ENCODE measurements at regions of chr4 and their contacts with region 1.

Region 1: GRCh38 chr4:62028745-62029144 is 828.6 kb downstream of the ADGRL3 start:
- DNase-seq: no peak
- ATAC-seq: no peak
- H3K4me3 ChIP-seq: no peak overlapping the region
- H3K4me3 Mint-ChIP-seq: no peak overlapping the region
- H3K27ac ChIP-seq: no peak overlapping the region
- H3K27ac Mint-ChIP-seq: no peak overlapping the region
- H3K4me1 ChIP-seq: no peaks in the 10 kb centered on the region
- H3K4me1 Mint-ChIP-seq: no peaks in the 10 kb centered on the region
- H3K27me3 ChIP-seq: no peaks in the 10 kb centered on the region
- H3K27me3 Mint-ChIP-seq: no peaks in the 10 kb centered on the region
- CTCF ChIP-seq: no peak

Region 2: DNA sequence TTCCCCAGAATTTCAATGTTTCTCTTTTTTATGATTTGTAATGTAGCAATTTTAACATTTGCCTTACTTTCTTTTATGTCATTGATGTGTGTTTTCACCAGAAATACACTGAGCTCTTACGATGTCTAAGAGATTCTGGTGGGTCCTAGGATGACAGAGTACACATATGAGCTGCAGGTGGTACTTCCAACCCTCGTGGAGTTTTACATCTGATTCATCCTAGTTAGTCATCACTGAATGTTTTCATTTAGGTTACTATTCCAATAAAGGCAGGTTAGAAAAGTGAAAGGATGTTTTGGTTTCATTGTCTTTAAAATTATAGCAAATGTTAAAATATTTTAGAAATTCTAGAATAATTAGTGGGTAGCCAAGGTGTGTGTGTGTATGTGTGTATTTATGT is 222.8 kb before region 1 on chr4:
- intact Hi-C with region 1: no loop called
- DNase-seq: no peak
- ATAC-seq: no peak
- H3K4me3 ChIP-seq: no peak overlapping the region
- H3K4me3 Mint-ChIP-seq: no peak overlapping the region
- H3K27ac ChIP-seq: no peak overlapping the region
- H3K27ac Mint-ChIP-seq: no peak overlapping the region
- H3K4me1 ChIP-seq: no peaks in the 10 kb centered on the region
- H3K4me1 Mint-ChIP-seq: no peaks in the 10 kb centered on the region
- H3K27me3 ChIP-seq: no peaks in the 10 kb centered on the region
- H3K27me3 Mint-ChIP-seq: no peaks in the 10 kb centered on the region
- CTCF ChIP-seq: no peak

Region 3: DNA sequence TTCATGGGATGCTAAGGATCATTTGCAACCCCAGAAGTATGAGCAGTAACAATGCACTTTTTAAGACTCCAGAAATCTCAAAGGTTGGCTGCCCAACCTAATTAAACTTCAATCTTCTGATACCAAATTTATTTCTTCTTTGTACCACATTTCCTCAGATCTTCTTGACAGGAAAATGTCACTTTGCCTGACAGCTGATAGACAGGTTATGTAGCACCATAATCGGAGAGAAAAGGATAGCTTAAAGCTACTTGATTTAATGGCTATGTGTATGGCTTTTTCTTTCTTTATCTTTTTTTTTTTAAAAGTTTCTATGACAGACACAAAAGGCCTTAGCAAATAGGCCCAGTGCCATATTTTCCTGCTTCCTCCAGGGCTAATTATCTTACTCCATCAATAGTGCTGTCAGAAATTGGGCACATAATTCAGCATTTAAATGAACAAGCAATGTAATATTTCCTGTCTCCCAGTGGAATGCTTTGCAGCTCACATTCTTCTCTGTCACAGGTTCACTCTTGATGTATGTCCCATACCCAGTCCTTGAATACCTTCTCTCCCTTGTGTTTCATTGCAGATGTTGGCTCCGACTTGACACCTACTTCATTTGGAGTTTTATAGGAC is 32.9 kb before region 1 on chr4:
- intact Hi-C with region 1: loop called (anchors 1 kb)
- DNase-seq: no peak
- ATAC-seq: no peak
- H3K4me3 ChIP-seq: no peak overlapping the region
- H3K4me3 Mint-ChIP-seq: no peak overlapping the region
- H3K27ac ChIP-seq: no peak overlapping the region
- H3K27ac Mint-ChIP-seq: no peak overlapping the region
- H3K4me1 ChIP-seq: no peaks in the 10 kb centered on the region
- H3K4me1 Mint-ChIP-seq: no peaks in the 10 kb centered on the region
- H3K27me3 ChIP-seq: no peaks in the 10 kb centered on the region
- H3K27me3 Mint-ChIP-seq: no peaks in the 10 kb centered on the region
- CTCF ChIP-seq: no peak

Measured in natural killer cell (primary cell).